Activated CD4-positive, alpha-beta memory T cell treated with anti-CD3 and anti-CD28 coated beads, Interleukin-2, amount 10 ng/mL, durations not matched to agents 7 days and 5 days (primary cell): ENCODE measurements at regions of chr11 and their contacts with region 1.

Region 1: GRCh38 chr11:18721561-18722292 is 4.3 kb downstream of the IGSF22 start:
- DNase-seq: peak; percentile 54
- H3K4me3 Mint-ChIP-seq: peak overlapping the region; percentile 80
- H3K27ac Mint-ChIP-seq: peak overlapping the region; percentile 31
- H3K4me1 Mint-ChIP-seq: peaks cover 12% of the 10 kb centered on the region
- H3K27me3 Mint-ChIP-seq: peaks cover 11% of the 10 kb centered on the region

Region 2: DNA sequence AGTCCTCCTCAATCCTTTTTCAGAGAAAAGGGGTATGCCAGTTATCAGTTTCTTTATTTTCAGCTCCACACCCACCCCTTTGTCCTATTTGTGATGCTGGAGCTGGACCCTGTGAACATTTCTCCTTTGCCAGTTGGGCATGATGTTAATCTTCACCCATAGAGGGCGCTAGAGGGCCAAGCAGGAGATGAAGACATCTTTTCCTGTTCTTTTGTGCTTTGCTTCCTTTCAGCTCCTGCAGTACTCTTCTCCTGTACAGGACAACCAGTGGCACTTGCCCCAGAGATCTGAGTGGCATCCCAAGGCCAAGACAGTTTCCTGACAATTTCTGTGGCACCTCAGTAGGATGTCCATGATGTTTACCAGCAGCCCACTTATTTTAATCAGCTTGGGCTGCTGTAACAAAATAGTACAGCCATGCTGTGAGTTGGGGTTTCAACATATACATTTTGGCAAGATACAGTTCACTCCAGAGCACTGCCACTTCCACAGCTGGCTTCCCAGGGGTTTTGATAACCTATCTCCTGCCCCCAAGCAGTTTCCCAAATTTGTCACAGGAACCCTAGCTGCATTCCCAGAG is 477.9 kb before region 1 on chr11:
- CTCF ChIA-PET with region 1: interaction called, 10 read pairs
- POLR2A ChIA-PET with region 1: no interaction called
- DNase-seq: peak; percentile 76
- H3K4me3 Mint-ChIP-seq: no peak overlapping the region
- H3K27ac Mint-ChIP-seq: no peak overlapping the region
- H3K4me1 Mint-ChIP-seq: peaks cover 35% of the 10 kb centered on the region
- H3K27me3 Mint-ChIP-seq: peaks cover 17% of the 10 kb centered on the region

Region 3: GRCh38 chr11:18501629-18502028 is 220.1 kb before region 1 on chr11:
- CTCF ChIA-PET with region 1: no interaction called
- POLR2A ChIA-PET with region 1: no interaction called
- DNase-seq: no peak
- H3K4me3 Mint-ChIP-seq: no peak overlapping the region
- H3K27ac Mint-ChIP-seq: no peak overlapping the region
- H3K4me1 Mint-ChIP-seq: no peaks in the 10 kb centered on the region
- H3K27me3 Mint-ChIP-seq: no peaks in the 10 kb centered on the region

Region 4: DNA sequence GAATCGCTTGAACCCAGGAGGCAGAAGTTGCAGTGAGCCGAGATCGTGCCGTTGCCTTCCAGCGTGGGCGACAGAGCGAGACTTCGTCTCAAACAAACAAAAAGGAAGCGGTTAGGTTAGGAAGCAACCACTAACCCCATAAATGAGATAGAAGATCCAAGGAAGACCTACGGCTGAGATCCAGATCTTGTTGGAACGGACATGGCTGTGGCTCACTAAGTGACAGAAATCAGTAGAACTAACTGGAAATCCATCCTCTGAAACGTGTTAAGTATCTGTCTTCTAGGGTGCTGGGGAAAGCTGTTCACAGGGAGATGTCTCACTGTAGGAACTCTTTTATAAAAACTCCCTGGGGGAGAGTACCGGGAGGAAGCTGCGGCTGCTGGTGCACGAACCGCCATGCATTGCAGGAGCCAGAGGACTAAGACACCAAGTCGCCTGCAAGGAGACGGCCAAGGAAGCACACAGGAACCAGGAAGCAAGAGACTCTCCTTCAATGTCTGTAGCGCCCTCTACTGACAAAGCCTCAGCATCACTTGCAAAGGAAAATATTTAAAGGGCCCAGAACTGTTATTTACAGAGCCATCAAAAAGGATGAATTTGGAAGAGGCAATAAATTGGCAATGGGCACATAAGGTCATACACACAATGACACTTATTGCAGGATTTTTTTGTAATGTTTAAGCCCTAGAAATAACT is 70.7 kb before region 1 on chr11:
- CTCF ChIA-PET with region 1: interaction called, 12 read pairs
- POLR2A ChIA-PET with region 1: no interaction called
- DNase-seq: peak; percentile 62
- H3K4me3 Mint-ChIP-seq: no peak overlapping the region
- H3K27ac Mint-ChIP-seq: no peak overlapping the region
- H3K4me1 Mint-ChIP-seq: peaks cover 14% of the 10 kb centered on the region
- H3K27me3 Mint-ChIP-seq: no peaks in the 10 kb centered on the region

Region 5: DNA sequence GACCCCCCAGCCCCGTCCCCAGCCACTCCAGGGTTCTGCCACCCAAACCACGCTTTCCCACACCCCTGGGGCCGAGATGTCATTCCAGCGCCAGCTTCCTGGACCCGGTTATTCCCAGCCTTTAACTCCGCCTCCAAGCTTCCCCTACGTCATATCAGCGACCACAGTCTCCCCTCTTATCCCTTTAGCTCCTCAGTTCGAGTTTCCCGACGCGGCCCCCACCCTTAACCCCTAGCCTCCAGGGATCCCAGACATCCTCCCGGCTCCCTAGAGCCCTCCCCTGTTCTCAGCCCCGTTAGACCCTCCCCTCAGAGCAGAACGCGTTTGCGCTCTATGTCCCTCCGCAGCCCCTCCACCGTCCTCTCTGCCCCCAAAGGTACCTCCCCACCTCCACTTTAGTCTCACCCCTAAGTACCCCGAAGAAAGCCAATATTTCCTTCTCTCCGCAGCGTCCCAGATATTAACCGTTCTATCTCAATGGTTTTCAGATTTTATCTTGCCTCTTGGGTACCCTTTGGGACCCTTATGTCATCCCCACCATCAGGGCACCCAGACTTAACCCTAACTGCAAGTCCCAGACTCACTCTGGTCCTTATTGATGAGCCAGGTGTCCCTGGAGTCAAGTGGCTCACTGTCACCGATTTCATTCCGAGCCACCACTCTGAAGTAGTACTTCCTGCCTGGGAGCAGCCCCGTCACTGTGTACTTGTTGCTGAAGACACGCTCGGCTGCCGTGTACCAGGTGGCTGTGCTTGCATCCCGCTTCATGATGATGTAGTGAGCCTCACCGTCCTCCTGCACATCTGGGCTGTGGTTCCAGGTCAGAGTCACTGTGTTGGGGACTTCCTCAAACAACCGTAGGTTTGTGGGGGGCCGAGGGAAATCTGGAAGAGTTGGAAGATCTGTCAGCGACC is 15.1 kb before region 1 on chr11:
- CTCF ChIA-PET with region 1: interaction called, 12 read pairs
- POLR2A ChIA-PET with region 1: interaction called, 4 read pairs
- DNase-seq: peak; percentile 59
- H3K4me3 Mint-ChIP-seq: peak overlapping the region; percentile 73
- H3K27ac Mint-ChIP-seq: peak overlapping the region; percentile 44
- H3K4me1 Mint-ChIP-seq: peaks cover 20% of the 10 kb centered on the region
- H3K27me3 Mint-ChIP-seq: peaks cover 46% of the 10 kb centered on the region

Region 6: GRCh38 chr11:18741783-18742182 is 20.1 kb after region 1 on chr11:
- CTCF ChIA-PET with region 1: interaction called, 13 read pairs
- POLR2A ChIA-PET with region 1: interaction called, 3 read pairs
- DNase-seq: no peak
- H3K4me3 Mint-ChIP-seq: no peak overlapping the region
- H3K27ac Mint-ChIP-seq: no peak overlapping the region
- H3K4me1 Mint-ChIP-seq: no peaks in the 10 kb centered on the region
- H3K27me3 Mint-ChIP-seq: no peaks in the 10 kb centered on the region